Tibial artery (tissue), 4 donors: ENCODE measurements at regions of chrX and their contacts with region 1.

Region 1: DNA sequence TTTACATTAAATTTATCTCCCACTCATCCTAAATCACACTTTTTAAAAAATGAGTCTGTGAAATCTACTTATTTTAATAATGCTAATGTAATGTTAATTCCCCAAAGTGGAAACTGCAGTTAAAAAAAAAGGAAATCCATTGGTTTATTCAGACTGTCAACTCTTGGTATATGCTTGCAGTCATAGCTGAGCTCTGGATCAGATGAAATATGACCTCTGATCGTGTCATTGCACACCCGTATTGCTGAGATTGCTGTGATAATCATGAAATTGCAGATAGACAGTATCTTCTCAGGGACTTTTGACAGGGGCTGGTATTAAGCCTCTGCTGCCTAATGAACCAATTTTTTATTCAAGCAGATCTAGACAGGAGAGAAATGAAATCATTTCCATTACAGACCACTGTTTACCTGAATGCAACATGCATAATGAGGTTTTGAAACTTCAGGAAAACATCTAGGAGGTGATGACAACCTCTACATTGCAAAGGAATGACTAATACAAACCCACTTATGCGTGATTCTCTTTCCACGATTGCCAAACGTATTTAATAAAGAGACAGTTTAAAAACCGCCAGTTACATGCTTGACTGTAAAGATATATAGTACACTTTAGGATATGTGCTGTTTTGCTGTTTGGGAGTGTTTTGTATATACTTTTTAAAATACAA is 138.3 kb upstream of the PUDP start:
- DNase-seq: no peak
- H3K4me3 ChIP-seq: no peak overlapping the region
- H3K27ac ChIP-seq: no peak overlapping the region
- H3K4me1 ChIP-seq: no peaks in the 10 kb centered on the region
- H3K27me3 ChIP-seq: no peaks in the 10 kb centered on the region
- CTCF ChIP-seq: no peak

Region 2: GRCh38 chrX:7139202-7140081 is 146.9 kb before region 1 on chrX:
- intact Hi-C with region 1: no loop called
- DNase-seq: no peak
- H3K4me3 ChIP-seq: no peak overlapping the region
- H3K27ac ChIP-seq: no peak overlapping the region
- H3K4me1 ChIP-seq: no peaks in the 10 kb centered on the region
- H3K27me3 ChIP-seq: no peaks in the 10 kb centered on the region
- CTCF ChIP-seq: no peak

Region 3: DNA sequence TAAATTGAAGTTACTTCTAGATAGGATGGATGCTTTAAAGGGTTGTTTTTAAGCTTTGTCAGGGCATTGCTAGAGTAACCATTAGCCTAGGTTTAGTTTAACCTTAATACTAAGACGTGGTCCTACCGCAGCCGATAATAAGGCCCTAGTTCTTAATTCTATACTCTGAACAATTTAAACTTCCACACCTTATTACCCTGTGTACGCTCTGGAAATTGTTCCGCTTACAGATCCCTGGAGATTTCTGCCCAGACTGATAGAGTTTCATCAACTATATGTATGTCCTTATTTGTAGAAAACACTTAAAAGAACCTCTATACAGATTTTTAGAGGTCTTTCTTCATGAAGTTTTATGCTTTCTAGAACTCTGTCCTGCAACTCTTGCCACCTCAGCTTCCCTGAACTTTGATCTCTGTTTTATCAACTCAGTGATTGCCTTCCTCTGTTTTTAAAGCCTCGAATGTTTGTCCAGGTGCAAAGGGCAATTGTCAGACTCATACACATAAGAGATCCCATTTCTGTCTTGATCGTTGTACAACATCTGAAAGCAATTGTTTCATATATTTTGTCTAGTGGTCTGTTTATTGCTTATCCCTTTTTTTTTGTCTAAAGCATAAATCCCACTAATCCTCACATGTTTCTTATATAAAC is 485.6 kb after region 1 on chrX:
- intact Hi-C with region 1: loop called (anchors 5 kb)
- DNase-seq: no peak
- H3K4me3 ChIP-seq: no peak overlapping the region
- H3K27ac ChIP-seq: no peak overlapping the region
- H3K4me1 ChIP-seq: no peaks in the 10 kb centered on the region
- H3K27me3 ChIP-seq: no peaks in the 10 kb centered on the region
- CTCF ChIP-seq: no peak